ENCODE measurements at regions of chr4 and their contacts with region 1.

Region 1: GRCh38 chr4:103008875-103009729 is 10.4 kb downstream of the SLC9B1 start:
- DNase-seq: peak; percentile 80
- ATAC-seq: peak; percentile 82
- H3K4me3 ChIP-seq: no peak overlapping the region
- H3K27ac ChIP-seq: no peak overlapping the region
- H3K4me1 ChIP-seq: peaks cover 10% of the 10 kb centered on the region
- H3K27me3 ChIP-seq: no peaks in the 10 kb centered on the region; the same call in 1 of the 2 replicates
- CTCF ChIP-seq: peak; percentile 91
- POLR2A ChIP-seq: no peak
- RAD21 ChIP-seq: peak; percentile 96

Region 2: DNA sequence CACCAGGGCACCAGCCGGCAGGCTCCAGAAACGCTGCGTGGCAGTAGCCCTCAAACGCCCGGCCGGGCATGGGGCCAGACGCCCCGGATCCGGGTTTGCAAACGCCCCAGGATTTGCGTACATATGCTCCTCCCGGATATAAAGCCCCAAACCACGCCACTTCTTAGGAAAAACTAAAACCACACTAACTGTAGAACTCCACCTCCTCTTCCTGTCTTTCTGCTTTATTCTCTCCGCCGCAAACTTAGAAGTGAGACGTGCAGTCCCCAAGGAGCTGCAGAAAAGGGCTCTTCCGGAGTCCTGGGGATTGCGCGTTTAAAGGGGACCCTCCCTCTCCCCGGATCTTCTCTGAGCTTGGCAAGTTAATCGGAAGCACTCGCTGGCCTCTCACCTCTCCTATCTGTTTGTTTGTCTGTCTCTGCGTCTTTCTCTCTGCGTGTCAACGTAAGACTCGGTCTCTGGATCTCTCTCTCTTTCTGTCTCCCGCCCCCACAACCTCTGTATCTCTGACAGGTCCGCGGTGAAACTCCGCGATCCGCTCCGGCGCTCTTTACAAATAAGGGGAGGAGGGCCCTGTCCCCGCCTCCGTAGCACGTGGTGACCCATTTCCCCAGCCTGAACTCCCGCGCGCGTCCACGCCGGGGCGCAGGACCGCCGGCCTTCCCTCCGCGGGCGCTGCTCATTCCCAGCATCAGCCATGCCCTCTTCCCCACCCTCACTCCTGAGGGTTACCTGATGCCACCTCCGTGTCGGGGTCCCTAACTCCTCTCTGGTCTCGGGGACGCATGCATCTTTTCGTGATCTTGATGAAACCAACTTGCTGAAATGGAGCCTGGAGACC is 663.9 kb before region 1 on chr4 and contains the start of gene SLC39A8:
- CTCF ChIA-PET with region 1: no interaction called
- POLR2A ChIA-PET with region 1: no interaction called
- dilution Hi-C with region 1: no loop called
- in situ Hi-C with region 1: loop called (anchors 10 kb)
- intact Hi-C with region 1: loop called (anchors 2 kb)
- DNase-seq: peak; percentile 44
- ATAC-seq: peak; percentile 90
- H3K4me3 ChIP-seq: peak within 1 kb of the TSS; percentile 52
- H3K27ac ChIP-seq: no peak within 1 kb of the TSS
- H3K4me1 ChIP-seq: no peaks in the 10 kb centered on the region
- H3K27me3 ChIP-seq: peaks cover 23% of the 10 kb centered on the region
- CTCF ChIP-seq: peak; percentile 59
- POLR2A ChIP-seq: no peak
- RAD21 ChIP-seq: peak; percentile 48
- total RNA-seq, gene SLC39A8: 0.18 and 0.28 TPM in 2 replicates

Region 3: GRCh38 chr4:102449751-102450352 is 559.2 kb before region 1 on chr4:
- CTCF ChIA-PET with region 1: no interaction called
- POLR2A ChIA-PET with region 1: no interaction called
- dilution Hi-C with region 1: no loop called
- in situ Hi-C with region 1: no loop called
- intact Hi-C with region 1: loop called (anchors 1 kb)
- DNase-seq: peak; percentile 64
- ATAC-seq: peak; percentile 68
- H3K4me3 ChIP-seq: no peak overlapping the region
- H3K27ac ChIP-seq: no peak overlapping the region
- H3K4me1 ChIP-seq: no peaks in the 10 kb centered on the region
- H3K27me3 ChIP-seq: no peaks in the 10 kb centered on the region
- CTCF ChIP-seq: peak; percentile 70
- POLR2A ChIP-seq: no peak
- RAD21 ChIP-seq: peak; percentile 82

Region 4: DNA sequence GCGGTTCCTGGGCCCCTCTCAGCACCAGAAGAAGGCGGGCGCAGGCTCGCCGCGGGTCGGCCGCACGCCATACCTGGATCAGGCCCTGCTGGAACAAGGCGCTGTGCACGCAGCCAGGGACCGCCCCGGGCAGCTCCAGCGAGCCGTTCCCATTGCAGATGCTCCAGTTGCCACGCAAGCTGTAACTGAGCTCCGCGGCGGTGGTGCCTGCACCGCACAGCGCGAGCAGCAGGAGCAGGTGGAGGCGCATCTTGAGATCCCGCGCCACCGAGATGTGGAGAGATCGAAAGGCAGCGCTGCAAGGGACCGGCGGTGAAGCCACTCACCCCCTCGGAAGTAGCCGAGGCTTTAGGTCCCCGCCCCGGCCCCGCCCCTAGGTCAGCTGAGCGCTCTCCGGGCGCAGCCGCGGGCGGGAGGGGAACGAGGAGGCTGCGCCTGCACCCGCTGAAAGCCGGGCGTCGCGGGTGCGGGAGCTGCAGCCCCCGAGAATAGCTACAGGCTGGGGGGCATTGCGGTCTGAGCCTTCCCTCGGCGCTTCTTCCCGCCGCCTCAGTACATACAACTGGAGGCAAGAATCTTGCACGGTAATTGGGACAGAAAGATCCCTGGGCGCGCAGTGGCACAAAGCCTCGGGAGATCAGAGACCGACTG is 248.3 kb before region 1 on chr4 and contains the start of gene MANBA:
- CTCF ChIA-PET with region 1: no interaction called
- POLR2A ChIA-PET with region 1: no interaction called
- dilution Hi-C with region 1: no loop called
- in situ Hi-C with region 1: no loop called
- intact Hi-C with region 1: loop called (anchors 5 kb)
- DNase-seq: peak; percentile 69
- ATAC-seq: peak; percentile 98
- H3K4me3 ChIP-seq: peak within 1 kb of the TSS; percentile 93
- H3K27ac ChIP-seq: peak within 1 kb of the TSS; percentile 67
- H3K4me1 ChIP-seq: peaks cover 5% of the 10 kb centered on the region
- H3K27me3 ChIP-seq: no peaks in the 10 kb centered on the region
- CTCF ChIP-seq: no peak
- POLR2A ChIP-seq: peak; percentile 58; the same call in 1 of the 2 replicates
- RAD21 ChIP-seq: no peak
- total RNA-seq, gene MANBA: 17.2 and 18.3 TPM in 2 replicates

Region 5: GRCh38 chr4:102868781-102869568 is 140.1 kb before region 1 on chr4 and contains the start of gene CISD2:
- CTCF ChIA-PET with region 1: no interaction called
- POLR2A ChIA-PET with region 1: no interaction called
- dilution Hi-C with region 1: no loop called
- in situ Hi-C with region 1: no loop called
- intact Hi-C with region 1: loop called (anchors 2 kb)
- DNase-seq: peak; percentile 85
- ATAC-seq: peak; percentile 98
- H3K4me3 ChIP-seq: peak within 1 kb of the TSS; percentile 81
- H3K27ac ChIP-seq: peak within 1 kb of the TSS; percentile 96
- H3K4me1 ChIP-seq: no peaks in the 10 kb centered on the region
- H3K27me3 ChIP-seq: no peaks in the 10 kb centered on the region
- CTCF ChIP-seq: no peak
- POLR2A ChIP-seq: peak; percentile 83
- RAD21 ChIP-seq: no peak
- total RNA-seq, gene CISD2: 7.0 and 21.1 TPM in 2 replicates